Activated CD4-positive, alpha-beta memory T cell treated with anti-CD3 and anti-CD28 coated beads for 36 hours (primary cell): ENCODE measurements at regions of chr14 and their contacts with region 1.

Region 1: DNA sequence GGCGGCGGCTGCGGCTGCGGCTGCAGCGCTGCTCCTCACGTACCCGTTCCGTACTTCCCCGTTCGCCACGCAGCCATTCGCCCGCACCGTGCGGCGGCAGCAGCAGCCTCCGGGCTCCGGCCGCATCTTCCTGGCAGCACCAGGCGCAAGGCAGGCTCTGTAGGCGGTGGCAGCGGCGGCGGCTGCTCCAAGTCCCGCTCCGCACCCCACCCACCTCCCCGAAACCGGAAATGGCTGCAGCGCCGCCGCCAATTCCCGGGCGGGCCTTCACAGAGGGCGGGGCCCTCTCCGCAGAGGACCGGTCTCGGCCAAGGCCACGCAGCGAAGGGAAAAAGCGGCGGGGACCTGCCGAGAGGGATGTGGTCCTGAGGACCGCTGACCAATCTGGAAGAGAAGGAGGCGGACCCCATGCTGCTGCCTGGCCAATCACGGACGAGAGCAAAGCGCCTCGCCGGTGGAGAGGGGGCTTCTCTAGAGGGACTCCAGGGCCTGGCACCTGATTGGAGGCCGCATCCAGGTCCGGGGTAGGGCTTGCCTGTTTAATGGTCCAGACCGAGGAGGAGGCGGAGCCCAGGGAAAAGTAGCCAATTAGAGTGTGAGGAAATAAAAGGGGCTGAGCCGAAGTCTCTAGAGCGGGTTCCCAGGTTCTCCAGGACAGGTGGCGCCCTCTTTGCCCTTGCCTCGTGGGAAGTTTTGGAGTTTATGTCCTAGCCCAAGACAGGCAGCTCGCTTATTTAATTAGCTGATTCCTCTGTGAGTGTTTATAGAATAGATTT is at the start of gene SPTLC2:
- DNase-seq: peak; percentile 98
- H3K4me3 Mint-ChIP-seq: peak within 1 kb of the TSS; percentile 89
- H3K27ac Mint-ChIP-seq: peak within 1 kb of the TSS; percentile 86
- H3K4me1 Mint-ChIP-seq: peaks cover 31% of the 10 kb centered on the region
- H3K27me3 Mint-ChIP-seq: no peaks in the 10 kb centered on the region
- total RNA-seq, gene SPTLC2: 23.6 to 23.9 TPM

Region 2: DNA sequence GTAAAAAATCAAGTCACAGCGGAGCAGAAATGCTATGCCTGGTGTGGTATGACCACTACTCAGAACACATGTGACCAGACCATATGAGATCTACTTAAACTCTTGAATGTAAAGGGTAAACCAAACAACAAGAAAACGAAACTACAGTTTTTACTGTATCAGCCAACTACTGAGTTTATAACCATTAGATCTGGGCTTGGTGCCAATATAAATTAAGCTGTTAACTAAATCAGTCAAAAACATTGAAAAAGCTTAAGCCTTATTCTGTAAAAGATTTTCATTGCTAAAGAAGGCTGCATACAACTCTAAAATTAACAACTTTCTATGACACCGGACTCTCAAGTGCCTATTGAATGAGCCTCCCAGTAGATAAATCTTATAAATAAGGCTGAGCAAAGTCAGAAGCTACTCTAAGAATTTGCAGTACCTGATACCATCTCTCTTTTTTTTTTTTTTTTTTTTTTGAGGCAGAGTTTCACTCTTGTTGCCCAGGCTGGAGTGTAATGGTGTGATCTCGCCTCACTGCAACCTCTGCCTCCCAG is 35.6 kb before region 1 on chr14:
- CTCF ChIA-PET with region 1: no interaction called
- POLR2A ChIA-PET with region 1: no interaction called
- intact Hi-C with region 1: loop called (anchors 2 kb)
- DNase-seq: no peak
- H3K4me3 Mint-ChIP-seq: no peak overlapping the region
- H3K27ac Mint-ChIP-seq: peak overlapping the region; percentile 28
- H3K4me1 Mint-ChIP-seq: peaks cover 23% of the 10 kb centered on the region
- H3K27me3 Mint-ChIP-seq: no peaks in the 10 kb centered on the region

Region 3: DNA sequence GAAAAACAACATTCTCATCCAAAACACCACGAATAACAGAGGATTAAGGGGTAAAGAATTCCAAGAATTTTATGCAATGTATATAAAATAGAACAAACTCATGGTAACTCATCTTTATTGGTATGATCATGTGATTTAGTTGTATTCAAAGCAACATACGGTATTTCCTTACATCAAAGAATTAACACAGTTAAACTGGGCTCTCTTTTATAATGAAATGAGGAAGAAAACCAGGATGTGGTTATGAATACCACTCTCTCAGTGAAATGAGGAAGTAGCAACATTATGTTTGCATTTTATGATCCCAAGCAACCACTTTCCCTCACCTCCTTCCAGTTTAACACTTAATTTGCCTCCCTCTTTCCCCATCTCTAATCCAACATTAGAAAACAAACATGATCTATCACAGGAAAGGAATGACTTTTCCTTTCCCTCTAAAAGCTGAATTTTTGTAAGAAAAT is 23.1 kb before region 1 on chr14:
- CTCF ChIA-PET with region 1: no interaction called
- POLR2A ChIA-PET with region 1: interaction called, 4 read pairs
- intact Hi-C with region 1: loop called (anchors 2 kb)
- DNase-seq: no peak
- H3K4me3 Mint-ChIP-seq: peak overlapping the region; percentile 21
- H3K27ac Mint-ChIP-seq: peak overlapping the region; percentile 83
- H3K4me1 Mint-ChIP-seq: peaks cover 40% of the 10 kb centered on the region
- H3K27me3 Mint-ChIP-seq: no peaks in the 10 kb centered on the region

Region 4: DNA sequence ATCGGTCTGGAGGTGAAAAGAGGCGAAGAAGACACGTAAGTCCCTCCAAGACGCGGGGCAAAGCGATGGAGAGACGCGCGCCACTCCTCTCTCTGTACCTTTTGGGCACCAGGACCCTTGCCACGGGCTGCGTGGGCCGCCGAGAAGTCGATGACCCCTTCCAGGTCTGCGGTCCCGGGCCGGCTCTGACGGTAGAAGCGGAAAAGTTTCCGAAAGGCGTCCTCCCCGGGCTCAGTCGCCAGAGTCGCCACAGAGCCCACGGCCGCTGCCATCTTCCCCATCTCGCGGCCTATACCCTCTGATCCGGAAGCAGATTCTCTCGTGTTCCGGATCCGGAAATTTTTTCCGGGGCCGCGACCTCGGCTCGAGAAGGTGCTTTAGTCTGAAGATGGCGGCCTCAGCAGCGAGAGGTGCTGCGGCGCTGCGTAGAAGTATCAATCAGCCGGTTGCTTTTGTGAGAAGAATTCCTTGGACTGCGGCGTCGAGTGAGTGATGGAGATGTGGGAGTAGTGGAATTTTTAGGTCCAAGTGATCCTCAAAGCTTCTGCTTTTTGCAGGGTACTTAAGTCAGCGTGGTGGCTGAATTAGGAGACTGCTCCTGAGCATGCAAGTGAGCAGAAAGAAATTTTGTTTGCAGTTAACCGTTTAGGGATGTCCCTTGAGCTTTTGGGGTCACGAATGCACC is 91.2 kb after region 1 on chr14 and contains the starts of genes ALKBH1 and SLIRP:
- CTCF ChIA-PET with region 1: no interaction called
- POLR2A ChIA-PET with region 1: no interaction called
- intact Hi-C with region 1: loop called (anchors 2 kb)
- DNase-seq: peak; percentile 93
- H3K4me3 Mint-ChIP-seq: peak within 1 kb of the TSS; percentile 90
- H3K27ac Mint-ChIP-seq: peak within 1 kb of the TSS; percentile 86
- H3K4me1 Mint-ChIP-seq: peaks cover 45% of the 10 kb centered on the region
- H3K27me3 Mint-ChIP-seq: no peaks in the 10 kb centered on the region
- total RNA-seq, gene ALKBH1: 13.2 to 16.1 TPM
- total RNA-seq, gene SLIRP: 138 to 146 TPM

Region 5: DNA sequence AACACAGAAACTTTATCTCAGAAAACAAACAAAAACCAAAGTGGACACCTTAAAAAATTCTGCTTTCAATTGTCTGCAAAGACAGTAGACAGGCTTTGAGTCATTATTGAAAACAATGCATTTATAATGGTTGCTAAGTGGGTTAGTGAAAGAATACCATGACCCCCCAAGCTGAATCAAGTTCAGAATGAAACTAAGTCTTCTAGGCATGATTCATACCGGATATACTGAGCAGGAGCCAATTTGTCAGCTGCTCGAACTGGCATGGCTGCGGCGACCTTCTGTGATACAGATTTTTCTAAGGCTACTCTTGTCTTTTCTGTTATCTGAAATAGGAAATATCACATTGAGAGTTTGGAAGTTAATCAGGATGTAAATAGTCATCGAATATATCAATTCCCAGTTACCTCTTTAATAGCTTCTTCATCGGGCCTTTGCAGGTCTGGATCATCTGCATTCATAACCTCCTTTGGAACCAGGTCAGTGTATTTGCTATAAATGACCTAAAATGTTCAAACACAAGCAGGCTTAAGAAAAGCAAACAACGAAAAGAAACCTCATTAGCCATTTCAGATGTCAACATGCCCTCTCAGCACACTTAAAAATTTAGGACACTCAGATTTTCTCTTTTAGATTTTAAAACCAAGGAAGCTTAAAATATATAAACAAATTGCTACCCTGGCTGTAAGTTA is 122.1 kb after region 1 on chr14:
- CTCF ChIA-PET with region 1: no interaction called
- POLR2A ChIA-PET with region 1: no interaction called
- intact Hi-C with region 1: loop called (anchors 1 kb)
- DNase-seq: peak; percentile 66
- H3K4me3 Mint-ChIP-seq: no peak overlapping the region
- H3K27ac Mint-ChIP-seq: peak overlapping the region; percentile 84
- H3K4me1 Mint-ChIP-seq: peaks cover 50% of the 10 kb centered on the region
- H3K27me3 Mint-ChIP-seq: no peaks in the 10 kb centered on the region

Region 6: DNA sequence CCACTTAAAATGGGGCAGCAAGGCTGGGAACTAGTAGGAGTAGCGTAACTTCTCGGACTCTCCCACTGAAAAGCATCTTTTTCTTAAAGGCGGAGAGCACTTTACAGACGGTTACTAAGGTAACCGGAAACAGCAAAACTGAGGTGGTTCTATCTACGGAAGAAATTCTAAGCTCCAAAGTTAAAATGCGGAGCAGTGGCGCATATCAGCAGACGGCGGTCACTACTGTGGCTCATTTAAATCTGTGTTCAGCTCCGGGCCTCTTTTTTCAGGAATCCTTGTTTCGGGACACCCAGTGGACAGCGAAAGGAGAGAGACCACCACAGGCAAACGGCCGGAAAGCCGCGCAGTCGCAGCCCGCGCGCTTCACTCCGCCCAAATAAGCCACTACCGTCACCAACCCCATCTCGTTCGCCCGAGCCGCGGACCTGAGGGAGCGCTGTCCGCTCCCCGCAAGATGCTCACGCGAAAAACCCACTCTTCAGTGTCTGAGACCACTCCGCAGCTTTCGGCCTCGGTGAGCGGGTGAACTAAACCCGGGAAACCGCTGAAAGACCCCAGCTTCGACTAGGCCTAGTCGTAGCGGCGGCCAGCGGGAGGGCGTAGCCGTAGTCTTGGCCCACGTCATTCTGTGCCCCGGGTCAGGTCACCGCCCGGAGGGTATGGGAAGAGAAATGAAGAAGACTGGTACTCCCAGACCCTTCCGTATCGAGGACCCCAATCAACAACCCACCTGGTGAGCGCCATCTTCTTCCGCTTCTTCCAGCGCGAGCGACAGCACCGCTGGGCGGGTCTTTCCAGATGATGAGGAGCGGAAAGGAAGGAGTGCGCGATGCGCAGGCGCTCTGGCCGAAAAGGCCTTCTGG is 144.0 kb after region 1 on chr14 and contains the start of gene SNW1:
- CTCF ChIA-PET with region 1: no interaction called
- POLR2A ChIA-PET with region 1: no interaction called
- intact Hi-C with region 1: loop called (anchors 1 kb)
- DNase-seq: peak; percentile 95
- H3K4me3 Mint-ChIP-seq: peak within 1 kb of the TSS; percentile 95
- H3K27ac Mint-ChIP-seq: peak within 1 kb of the TSS; percentile 96
- H3K4me1 Mint-ChIP-seq: peaks cover 32% of the 10 kb centered on the region
- H3K27me3 Mint-ChIP-seq: no peaks in the 10 kb centered on the region
- total RNA-seq, gene SNW1: 115 to 120 TPM